Right ventricle myocardium inferior (tissue), 1 donor: ENCODE measurements at regions of chr19 and their contacts with region 1.

Region 1: GRCh38 chr19:5048727-5049553 is 80.0 kb downstream of the KDM4B start:
- DNase-seq: no peak
- ATAC-seq: no peak

Region 2: GRCh38 chr19:5103061-5103701 is 54.2 kb after region 1 on chr19:
- intact Hi-C with region 1: no loop called
- DNase-seq: peak; percentile 82
- ATAC-seq: peak; percentile 79

Region 3: DNA sequence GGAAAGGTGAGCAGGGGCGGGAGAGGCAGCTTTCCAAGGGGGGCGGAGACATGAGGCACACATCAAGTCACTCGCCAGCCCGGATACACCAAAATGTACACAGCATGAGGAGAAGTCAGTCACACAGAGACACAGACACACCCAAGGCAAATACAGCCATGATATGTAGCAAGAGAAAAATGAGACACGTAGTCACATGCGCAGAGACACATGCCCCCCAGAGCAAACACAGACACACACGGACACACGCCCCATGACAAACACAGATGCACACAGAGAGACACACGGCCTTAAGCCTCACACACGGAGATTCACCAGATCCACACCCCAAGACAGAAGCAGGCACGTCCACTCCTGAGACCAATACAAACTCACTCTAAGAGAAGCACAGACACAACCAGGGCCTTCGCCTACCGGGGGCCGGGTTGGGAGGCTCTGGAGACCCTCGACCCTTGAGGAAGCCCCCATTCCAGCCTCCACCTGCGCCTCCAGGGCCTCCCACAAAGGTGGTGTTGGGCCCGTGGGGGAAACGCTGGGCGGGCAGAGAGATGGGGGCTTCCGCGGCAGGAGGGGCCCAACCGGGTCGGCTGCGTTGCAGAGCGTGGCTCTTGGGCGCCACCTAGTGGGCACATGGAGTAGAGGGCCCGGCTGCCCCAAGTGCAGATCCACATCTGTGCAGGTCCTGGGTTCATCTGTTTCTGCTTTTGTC is 529.0 kb after region 1 on chr19:
- intact Hi-C with region 1: loop called (anchors 1 kb)
- DNase-seq: peak; percentile 84
- ATAC-seq: peak; percentile 72